Naive thymus-derived CD4-positive, alpha-beta T cell (primary cell): ENCODE measurements at regions of chr15 and their contacts with region 1.

Region 1: GRCh38 chr15:52208306-52208946 is 17.2 kb upstream of the GNB5 start:
- DNase-seq: peak; percentile 45 to 77 (median 70)
- ATAC-seq: peak; percentile 95
- H3K4me3 ChIP-seq: no peak overlapping the region
- H3K4me3 Mint-ChIP-seq: no peak overlapping the region
- H3K27ac ChIP-seq: no peak overlapping the region
- H3K27ac Mint-ChIP-seq: peak overlapping the region in 4 of 9 donors; percentile 4 to 77 (median 69)
- H3K4me1 ChIP-seq: no peaks in the 10 kb centered on the region
- H3K4me1 Mint-ChIP-seq: peaks cover 0 to 6% (median 0%) of the 10 kb centered on the region in 7 donors
- H3K27me3 ChIP-seq: no peaks in the 10 kb centered on the region
- H3K27me3 Mint-ChIP-seq: no peaks in the 10 kb centered on the region

Region 2: DNA sequence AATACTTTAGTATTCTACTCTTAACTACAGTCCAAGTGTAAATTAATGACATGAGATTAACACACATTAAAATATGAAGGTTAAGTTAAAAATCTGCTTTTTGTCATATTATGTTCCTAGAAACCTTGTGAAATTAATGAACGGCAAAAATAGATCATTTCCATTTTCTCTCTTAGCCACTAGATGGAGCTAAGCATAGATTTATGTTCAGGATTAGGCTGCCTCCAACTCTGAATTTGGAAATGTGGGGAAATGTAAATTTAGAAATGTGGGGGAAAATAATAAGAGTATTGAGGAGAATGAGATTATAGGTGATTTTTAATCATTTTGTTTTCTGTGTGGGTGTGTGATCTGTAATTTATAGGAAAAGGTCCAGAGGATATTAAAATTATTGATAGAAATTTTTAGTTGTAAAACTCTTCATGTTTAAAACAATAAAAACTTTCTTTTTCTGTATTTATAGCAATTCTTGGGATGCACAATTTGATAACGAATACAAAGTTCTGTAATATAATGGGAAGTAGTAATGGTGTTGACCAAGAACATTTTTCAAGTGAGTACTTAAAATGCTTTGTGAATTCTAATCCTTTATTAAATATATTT is 319.7 kb before region 1 on chr15:
- CTCF ChIA-PET with region 1: interaction called, 5 read pairs
- POLR2A ChIA-PET with region 1: no interaction called
- intact Hi-C with region 1: loop called in 1 of 2 experiments (anchors 1 kb)
- DNase-seq: peak in 4 of 9 donors; percentile 5 to 29 (median 14)
- ATAC-seq: peak; percentile 40
- H3K4me3 ChIP-seq: no peak overlapping the region
- H3K4me3 Mint-ChIP-seq: no peak overlapping the region
- H3K27ac ChIP-seq: no peak overlapping the region
- H3K27ac Mint-ChIP-seq: peak overlapping the region in 3 of 9 donors; percentile 0 to 22 (median 0)
- H3K4me1 ChIP-seq: peaks cover 0 to 3% of the 10 kb centered on the region in 2 donors
- H3K4me1 Mint-ChIP-seq: peaks cover 0 to 13% (median 5%) of the 10 kb centered on the region in 7 donors
- H3K27me3 ChIP-seq: no peaks in the 10 kb centered on the region
- H3K27me3 Mint-ChIP-seq: no peaks in the 10 kb centered on the region

Region 3: DNA sequence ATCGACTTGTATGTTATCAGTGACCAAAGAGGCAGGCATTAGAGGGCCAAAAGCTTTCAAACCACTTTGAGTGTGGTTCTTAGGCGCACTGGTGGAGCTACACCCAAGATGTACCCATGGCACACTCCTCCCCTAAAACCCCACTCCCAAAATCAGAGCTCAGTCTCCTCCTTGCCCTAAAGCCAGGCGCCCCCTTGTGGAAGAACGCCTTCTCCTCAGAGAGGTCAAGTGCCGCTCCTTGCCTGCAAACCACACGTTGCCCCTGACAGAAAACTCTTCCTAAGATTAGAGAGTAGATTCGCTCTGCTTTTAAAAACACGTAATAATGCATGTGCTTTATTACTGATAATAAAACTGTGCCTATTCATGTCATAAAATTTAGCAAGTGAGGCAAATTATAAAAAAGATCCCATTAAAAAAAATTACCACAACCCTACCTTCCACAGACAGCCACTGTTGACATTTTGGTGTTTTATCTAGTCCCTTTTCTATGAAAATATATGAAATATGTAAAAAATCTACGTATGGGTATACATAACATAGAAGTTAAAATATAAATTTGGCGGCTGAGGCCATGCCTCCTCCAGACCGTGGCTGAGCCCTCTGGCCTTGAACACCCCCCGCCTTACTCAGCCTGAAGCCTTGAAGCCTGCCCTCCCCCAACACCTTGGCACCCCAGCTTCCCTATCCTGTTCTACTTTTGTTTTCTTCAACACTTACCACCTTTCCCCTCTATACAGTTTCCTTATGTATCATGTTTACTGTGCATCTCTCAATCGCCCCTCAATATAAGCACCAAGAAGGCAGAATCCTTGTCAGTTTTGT is 129.3 kb before region 1 on chr15:
- CTCF ChIA-PET with region 1: interaction called, 3 read pairs
- POLR2A ChIA-PET with region 1: no interaction called
- intact Hi-C with region 1: loop called in 1 of 2 experiments (anchors 1 kb)
- DNase-seq: peak; percentile 58 to 82 (median 75)
- ATAC-seq: peak; percentile 87
- H3K4me3 ChIP-seq: no peak overlapping the region
- H3K4me3 Mint-ChIP-seq: no peak overlapping the region
- H3K27ac ChIP-seq: no peak overlapping the region
- H3K27ac Mint-ChIP-seq: peak overlapping the region in 1 of 9 donors; percentile 49
- H3K4me1 ChIP-seq: peaks cover 0 to 13% of the 10 kb centered on the region in 2 donors
- H3K4me1 Mint-ChIP-seq: peaks cover 0 to 26% (median 10%) of the 10 kb centered on the region in 7 donors
- H3K27me3 ChIP-seq: no peaks in the 10 kb centered on the region
- H3K27me3 Mint-ChIP-seq: peaks cover 0 to 7% (median 0%) of the 10 kb centered on the region in 5 donors

Region 4: DNA sequence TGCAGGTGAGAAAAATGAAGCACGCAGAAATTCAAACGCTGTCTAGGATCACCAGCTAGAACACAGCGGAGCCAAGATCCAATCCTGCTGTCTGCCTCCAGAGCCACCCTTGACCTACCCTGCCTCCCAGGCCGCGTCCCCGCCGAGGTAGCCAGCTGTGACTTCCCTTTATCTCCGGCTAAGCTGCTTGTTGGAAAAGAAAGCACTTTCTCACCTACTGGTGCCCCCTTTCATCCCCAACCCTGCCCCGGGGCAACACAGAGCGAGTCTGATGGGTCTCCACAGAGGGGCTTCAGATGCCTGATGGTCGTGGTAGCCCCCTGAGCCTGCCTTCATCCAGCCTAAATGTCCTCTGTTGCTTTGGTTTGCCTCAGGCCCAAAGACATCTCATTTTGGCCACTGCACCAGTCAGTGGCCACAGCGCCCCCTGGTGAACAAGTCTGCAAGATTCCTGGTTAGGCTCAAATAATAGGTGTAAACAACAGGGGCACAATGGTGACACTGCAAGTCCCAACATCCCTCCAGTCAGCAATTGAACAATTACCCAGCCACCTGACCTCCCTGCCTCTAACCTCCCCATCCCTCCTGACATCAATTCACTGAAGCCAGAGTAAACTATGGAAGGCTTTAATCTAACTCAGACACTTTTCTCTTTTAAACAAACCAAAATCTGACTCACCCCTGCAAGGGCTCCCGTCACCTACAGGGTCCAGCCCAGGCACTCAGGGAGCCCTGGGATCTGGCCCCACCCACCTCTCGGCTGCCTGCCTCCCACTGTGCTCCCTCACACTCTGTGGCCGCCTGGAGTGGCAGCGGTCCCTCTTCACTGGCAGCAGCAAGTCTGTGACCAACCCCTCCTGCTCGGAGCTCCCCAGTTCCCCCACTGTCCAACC is 68.6 kb before region 1 on chr15:
- CTCF ChIA-PET with region 1: interaction called, 3 read pairs
- POLR2A ChIA-PET with region 1: no interaction called
- intact Hi-C with region 1: loop called in 1 of 2 experiments (anchors 1 kb)
- DNase-seq: peak; percentile 17 to 70 (median 49)
- ATAC-seq: peak; percentile 71
- H3K4me3 ChIP-seq: no peak overlapping the region
- H3K4me3 Mint-ChIP-seq: no peak overlapping the region
- H3K27ac ChIP-seq: no peak overlapping the region
- H3K27ac Mint-ChIP-seq: peak overlapping the region in 3 of 9 donors; percentile 20 to 65 (median 63)
- H3K4me1 ChIP-seq: peaks cover 13 to 14% of the 10 kb centered on the region in 2 donors
- H3K4me1 Mint-ChIP-seq: peaks cover 8 to 29% (median 22%) of the 10 kb centered on the region in 7 donors
- H3K27me3 ChIP-seq: no peaks in the 10 kb centered on the region
- H3K27me3 Mint-ChIP-seq: no peaks in the 10 kb centered on the region

Region 5: DNA sequence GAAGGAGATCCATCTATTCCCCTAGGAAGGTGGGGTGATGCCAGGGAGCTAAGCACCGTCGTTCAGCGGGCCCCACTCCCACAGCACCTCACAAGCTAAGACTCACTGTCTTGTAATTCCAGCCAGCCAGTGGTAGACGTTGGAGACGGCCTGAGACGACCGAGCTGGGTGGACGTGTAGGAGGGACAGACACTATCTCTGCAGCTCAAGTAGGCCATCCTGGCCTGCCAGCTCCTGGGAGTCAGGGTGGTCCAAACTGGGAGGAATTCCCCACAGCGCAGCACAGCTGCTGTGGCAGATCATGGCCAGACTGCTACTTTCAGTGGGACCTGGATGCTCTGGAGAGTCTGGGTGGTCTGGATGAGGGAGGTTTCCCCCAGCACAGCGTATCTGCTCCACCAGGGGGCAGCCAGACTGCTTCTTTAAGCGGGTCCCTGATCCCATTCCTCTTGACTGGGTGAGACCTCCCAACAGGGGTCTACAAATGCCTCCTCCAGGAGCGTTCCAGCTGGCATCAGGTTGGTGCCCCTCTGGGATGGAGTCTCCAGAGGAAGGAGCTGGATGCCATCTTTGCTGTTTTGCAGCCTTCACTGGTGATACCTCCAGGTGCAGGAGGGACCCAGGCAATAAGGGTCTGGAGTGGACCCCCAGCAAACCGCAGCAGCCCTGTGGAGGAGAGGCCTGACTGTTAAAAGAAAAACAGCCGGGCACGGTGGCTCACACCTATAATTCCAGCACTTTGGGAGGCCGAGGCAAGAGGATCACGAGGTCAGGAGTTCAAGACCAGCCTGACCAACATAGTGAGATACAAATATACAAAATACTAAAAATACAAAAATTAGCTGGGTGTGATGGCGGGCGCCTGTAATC is 44.9 kb before region 1 on chr15:
- CTCF ChIA-PET with region 1: interaction called, 6 read pairs
- POLR2A ChIA-PET with region 1: no interaction called
- intact Hi-C with region 1: loop called (anchors 1 kb)
- DNase-seq: no peak
- ATAC-seq: no peak
- H3K4me3 ChIP-seq: no peak overlapping the region
- H3K4me3 Mint-ChIP-seq: no peak overlapping the region
- H3K27ac ChIP-seq: no peak overlapping the region
- H3K27ac Mint-ChIP-seq: no peak overlapping the region
- H3K4me1 ChIP-seq: peaks cover 0 to 5% of the 10 kb centered on the region in 2 donors
- H3K4me1 Mint-ChIP-seq: peaks cover 18 to 46% (median 37%) of the 10 kb centered on the region in 7 donors
- H3K27me3 ChIP-seq: no peaks in the 10 kb centered on the region
- H3K27me3 Mint-ChIP-seq: peaks cover 0 to 2% (median 0%) of the 10 kb centered on the region in 5 donors

Region 6: GRCh38 chr15:52171386-52171785 is 37.0 kb before region 1 on chr15:
- CTCF ChIA-PET with region 1: interaction called, 8 read pairs
- POLR2A ChIA-PET with region 1: no interaction called
- intact Hi-C with region 1: loop called in 1 of 2 experiments (anchors 2 kb)
- DNase-seq: peak in 5 of 9 donors; percentile 28 to 41 (median 31)
- ATAC-seq: peak; percentile 73
- H3K4me3 ChIP-seq: no peak overlapping the region
- H3K4me3 Mint-ChIP-seq: peak overlapping the region in 7 of 10 donors; percentile 18 to 71 (median 46)
- H3K27ac ChIP-seq: no peak overlapping the region
- H3K27ac Mint-ChIP-seq: peak overlapping the region in 8 of 9 donors; percentile 2 to 74 (median 43)
- H3K4me1 ChIP-seq: peaks cover 8 to 15% of the 10 kb centered on the region in 2 donors
- H3K4me1 Mint-ChIP-seq: peaks cover 27 to 71% (median 54%) of the 10 kb centered on the region in 7 donors
- H3K27me3 ChIP-seq: no peaks in the 10 kb centered on the region
- H3K27me3 Mint-ChIP-seq: peaks cover 0 to 2% (median 0%) of the 10 kb centered on the region in 5 donors

Region 7: GRCh38 chr15:52179278-52180195 is 28.9 kb before region 1 on chr15:
- CTCF ChIA-PET with region 1: interaction called, 4 read pairs
- POLR2A ChIA-PET with region 1: interaction called, 3 read pairs
- intact Hi-C with region 1: loop called (anchors 1 kb)
- DNase-seq: peak; percentile 79 to 92 (median 91)
- ATAC-seq: peak; percentile 91
- H3K4me3 ChIP-seq: peak overlapping the region; percentile 98
- H3K4me3 Mint-ChIP-seq: peak overlapping the region; percentile 86 to 100 (median 94)
- H3K27ac ChIP-seq: peak overlapping the region; percentile 95
- H3K27ac Mint-ChIP-seq: peak overlapping the region; percentile 90 to 99 (median 98)
- H3K4me1 ChIP-seq: peaks cover 19 to 20% of the 10 kb centered on the region in 2 donors
- H3K4me1 Mint-ChIP-seq: peaks cover 14 to 50% (median 40%) of the 10 kb centered on the region in 7 donors
- H3K27me3 ChIP-seq: no peaks in the 10 kb centered on the region
- H3K27me3 Mint-ChIP-seq: no peaks in the 10 kb centered on the region

Region 8: DNA sequence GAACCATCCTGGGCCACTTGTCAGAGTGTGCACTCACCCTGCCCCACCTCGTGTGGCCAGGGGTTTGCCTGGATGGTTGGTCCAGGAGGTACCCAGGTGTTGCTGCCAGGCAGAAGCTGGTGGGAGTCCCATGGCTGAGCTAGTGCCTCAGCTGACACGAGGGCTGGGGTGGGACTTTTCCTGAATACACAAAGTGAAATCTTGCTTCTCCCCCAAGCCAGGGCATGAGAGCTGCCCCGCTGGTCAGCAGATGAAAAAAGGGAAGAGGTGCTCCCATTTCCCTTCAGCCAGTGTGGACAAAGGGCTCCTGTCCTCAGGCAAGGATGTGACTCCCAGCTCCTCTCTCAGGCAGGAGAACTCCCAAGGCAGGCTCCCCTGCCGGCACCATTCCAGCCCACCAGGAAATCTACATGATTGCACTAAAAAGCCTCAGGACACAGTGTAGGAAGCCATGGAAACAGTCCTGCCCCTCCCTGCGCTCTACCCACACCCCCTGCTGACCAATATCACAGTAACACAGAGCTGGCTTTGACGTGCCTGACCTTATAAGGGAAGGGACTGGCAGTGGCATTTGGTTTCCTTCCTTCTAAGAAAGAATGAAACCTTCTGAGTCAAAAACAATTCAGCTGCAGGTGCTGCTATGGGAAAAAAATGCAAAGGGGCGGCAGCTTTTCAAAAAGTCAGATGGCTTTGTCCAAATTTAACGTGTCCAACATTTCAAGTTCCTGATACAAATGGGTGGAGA is 53.2 kb after region 1 on chr15:
- CTCF ChIA-PET with region 1: no interaction called
- POLR2A ChIA-PET with region 1: no interaction called
- intact Hi-C with region 1: no loop called
- DNase-seq: peak in 7 of 9 donors; percentile 11 to 63 (median 29)
- ATAC-seq: peak; percentile 92
- H3K4me3 ChIP-seq: no peak overlapping the region
- H3K4me3 Mint-ChIP-seq: peak overlapping the region; percentile 50 to 70 (median 66)
- H3K27ac ChIP-seq: peak overlapping the region; percentile 35
- H3K27ac Mint-ChIP-seq: peak overlapping the region; percentile 16 to 90 (median 71)
- H3K4me1 ChIP-seq: peaks cover 16 to 34% of the 10 kb centered on the region in 2 donors
- H3K4me1 Mint-ChIP-seq: peaks cover 27 to 55% (median 39%) of the 10 kb centered on the region in 7 donors
- H3K27me3 ChIP-seq: no peaks in the 10 kb centered on the region
- H3K27me3 Mint-ChIP-seq: no peaks in the 10 kb centered on the region

Region 9: DNA sequence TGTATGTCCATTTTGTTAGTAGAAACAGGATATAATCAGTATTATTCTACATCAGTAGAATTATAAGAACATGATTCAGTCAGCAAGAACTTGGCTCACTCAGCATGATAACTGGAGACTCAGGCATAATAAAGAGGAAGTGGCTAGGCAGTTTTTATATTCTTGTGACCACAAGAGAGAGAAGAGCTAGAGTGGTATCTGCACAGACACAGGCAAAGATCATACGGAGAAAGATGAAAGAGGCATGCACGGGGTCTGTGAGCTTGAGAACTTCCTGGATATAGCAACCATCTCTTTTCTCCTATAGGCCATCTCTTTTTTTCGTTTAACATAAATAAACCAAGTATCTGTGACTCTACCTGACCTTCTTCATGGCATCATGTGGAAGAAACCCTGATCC is 273.5 kb after region 1 on chr15:
- CTCF ChIA-PET with region 1: no interaction called
- POLR2A ChIA-PET with region 1: no interaction called
- intact Hi-C with region 1: no loop called
- DNase-seq: peak in 7 of 9 donors; percentile 75 to 91 (median 87)
- ATAC-seq: peak; percentile 99
- H3K4me3 ChIP-seq: peak overlapping the region; percentile 36
- H3K4me3 Mint-ChIP-seq: peak overlapping the region; percentile 8 to 78 (median 58)
- H3K27ac ChIP-seq: no peak overlapping the region
- H3K27ac Mint-ChIP-seq: peak overlapping the region; percentile 15 to 88 (median 53)
- H3K4me1 ChIP-seq: peaks cover 30 to 43% of the 10 kb centered on the region in 2 donors
- H3K4me1 Mint-ChIP-seq: peaks cover 56 to 71% (median 59%) of the 10 kb centered on the region in 7 donors
- H3K27me3 ChIP-seq: no peaks in the 10 kb centered on the region
- H3K27me3 Mint-ChIP-seq: no peaks in the 10 kb centered on the region